Activated B cell treated with CpG ODN at 0.5 μM for 24 hours (primary cell): ENCODE measurements at regions of chr17 and their contacts with region 1.

Region 1: GRCh38 chr17:61412143-61412859 is 12.7 kb downstream of the TBX2 start:
- DNase-seq: peak; percentile 84
- ATAC-seq: peak; percentile 76
- H3K4me3 Mint-ChIP-seq: peak overlapping the region; percentile 74
- H3K27ac Mint-ChIP-seq: no peak overlapping the region
- H3K4me1 Mint-ChIP-seq: peaks cover 35% of the 10 kb centered on the region
- H3K27me3 Mint-ChIP-seq: peaks cover 29% of the 10 kb centered on the region
- CTCF ChIP-seq: peak; percentile 67

Region 2: GRCh38 chr17:60677308-60678124 is 734.8 kb before region 1 on chr17 and contains the start of gene BCAS3:
- CTCF ChIA-PET with region 1: no interaction called
- POLR2A ChIA-PET with region 1: no interaction called
- intact Hi-C with region 1: loop called (anchors 5 kb)
- DNase-seq: peak; percentile 84
- ATAC-seq: peak; percentile 95
- H3K4me3 Mint-ChIP-seq: peak within 1 kb of the TSS; percentile 99
- H3K27ac Mint-ChIP-seq: peak within 1 kb of the TSS; percentile 94
- H3K4me1 Mint-ChIP-seq: peaks cover 23% of the 10 kb centered on the region
- H3K27me3 Mint-ChIP-seq: no peaks in the 10 kb centered on the region
- CTCF ChIP-seq: no peak
- total RNA-seq, gene BCAS3: 25.8 and 37.5 TPM in 2 replicates

Region 3: DNA sequence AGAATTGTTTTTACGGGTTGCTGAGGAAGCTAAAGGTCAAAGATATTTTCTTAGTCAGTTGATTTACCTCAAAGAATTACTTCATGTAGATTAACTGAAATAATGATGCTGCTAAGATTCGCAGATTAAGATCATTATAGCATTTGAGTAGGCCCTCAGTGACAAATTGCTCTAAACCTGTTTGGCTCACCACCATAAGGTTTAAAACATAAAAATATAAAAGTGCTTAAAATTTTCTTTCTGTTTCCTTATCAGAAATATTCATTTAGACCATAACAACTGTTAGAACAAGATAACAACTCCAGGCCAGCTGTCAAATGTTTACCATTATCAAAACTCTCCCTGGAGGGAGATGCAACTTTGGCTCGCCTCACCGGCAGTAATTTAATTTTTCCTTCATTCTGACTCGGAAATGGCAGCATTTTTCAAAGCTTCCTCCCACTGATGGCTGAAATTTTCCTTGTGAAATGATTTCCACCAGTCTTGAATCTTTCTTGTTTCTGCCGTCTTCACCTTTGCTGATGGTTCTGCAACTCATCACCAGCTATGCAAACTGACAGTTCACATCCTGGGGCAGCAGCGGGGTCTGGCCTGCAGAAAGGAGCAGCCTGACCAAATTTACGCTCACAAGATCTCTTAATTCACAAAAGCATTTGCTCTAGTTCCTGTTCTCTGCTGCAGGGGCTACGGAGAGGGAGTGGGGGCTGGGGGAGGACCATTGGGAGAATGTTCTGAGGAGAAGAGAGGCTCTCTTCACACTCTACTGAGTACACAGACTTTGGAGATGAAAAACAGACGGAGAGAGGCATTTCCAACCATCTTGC is 267.3 kb before region 1 on chr17:
- CTCF ChIA-PET with region 1: no interaction called
- POLR2A ChIA-PET with region 1: no interaction called
- intact Hi-C with region 1: loop called (anchors 10 kb)
- DNase-seq: no peak
- ATAC-seq: peak; percentile 54
- H3K4me3 Mint-ChIP-seq: peak overlapping the region; percentile 61
- H3K27ac Mint-ChIP-seq: peak overlapping the region; percentile 73
- H3K4me1 Mint-ChIP-seq: peaks cover 45% of the 10 kb centered on the region
- H3K27me3 Mint-ChIP-seq: no peaks in the 10 kb centered on the region
- CTCF ChIP-seq: no peak

Region 4: GRCh38 chr17:61452301-61453290 is 40.3 kb after region 1 on chr17 and contains the start of gene TBX4:
- CTCF ChIA-PET with region 1: interaction called, 3 read pairs
- POLR2A ChIA-PET with region 1: no interaction called
- intact Hi-C with region 1: loop called (anchors 2 kb)
- DNase-seq: no peak
- ATAC-seq: no peak
- H3K4me3 Mint-ChIP-seq: peak within 1 kb of the TSS; percentile 48
- H3K27ac Mint-ChIP-seq: no peak within 1 kb of the TSS
- H3K4me1 Mint-ChIP-seq: peaks cover 32% of the 10 kb centered on the region
- H3K27me3 Mint-ChIP-seq: peaks cover 61% of the 10 kb centered on the region
- CTCF ChIP-seq: no peak
- total RNA-seq, gene TBX4: not detected in 2 replicates

Region 5: GRCh38 chr17:61635913-61636432 is 223.7 kb after region 1 on chr17:
- CTCF ChIA-PET with region 1: interaction called, 3 read pairs
- POLR2A ChIA-PET with region 1: no interaction called
- intact Hi-C with region 1: loop called (anchors 5 kb)
- DNase-seq: no peak
- ATAC-seq: no peak
- H3K4me3 Mint-ChIP-seq: no peak overlapping the region
- H3K27ac Mint-ChIP-seq: no peak overlapping the region
- H3K4me1 Mint-ChIP-seq: peaks cover 10% of the 10 kb centered on the region
- H3K27me3 Mint-ChIP-seq: peaks cover 34% of the 10 kb centered on the region
- CTCF ChIP-seq: peak; percentile 70

Region 6: DNA sequence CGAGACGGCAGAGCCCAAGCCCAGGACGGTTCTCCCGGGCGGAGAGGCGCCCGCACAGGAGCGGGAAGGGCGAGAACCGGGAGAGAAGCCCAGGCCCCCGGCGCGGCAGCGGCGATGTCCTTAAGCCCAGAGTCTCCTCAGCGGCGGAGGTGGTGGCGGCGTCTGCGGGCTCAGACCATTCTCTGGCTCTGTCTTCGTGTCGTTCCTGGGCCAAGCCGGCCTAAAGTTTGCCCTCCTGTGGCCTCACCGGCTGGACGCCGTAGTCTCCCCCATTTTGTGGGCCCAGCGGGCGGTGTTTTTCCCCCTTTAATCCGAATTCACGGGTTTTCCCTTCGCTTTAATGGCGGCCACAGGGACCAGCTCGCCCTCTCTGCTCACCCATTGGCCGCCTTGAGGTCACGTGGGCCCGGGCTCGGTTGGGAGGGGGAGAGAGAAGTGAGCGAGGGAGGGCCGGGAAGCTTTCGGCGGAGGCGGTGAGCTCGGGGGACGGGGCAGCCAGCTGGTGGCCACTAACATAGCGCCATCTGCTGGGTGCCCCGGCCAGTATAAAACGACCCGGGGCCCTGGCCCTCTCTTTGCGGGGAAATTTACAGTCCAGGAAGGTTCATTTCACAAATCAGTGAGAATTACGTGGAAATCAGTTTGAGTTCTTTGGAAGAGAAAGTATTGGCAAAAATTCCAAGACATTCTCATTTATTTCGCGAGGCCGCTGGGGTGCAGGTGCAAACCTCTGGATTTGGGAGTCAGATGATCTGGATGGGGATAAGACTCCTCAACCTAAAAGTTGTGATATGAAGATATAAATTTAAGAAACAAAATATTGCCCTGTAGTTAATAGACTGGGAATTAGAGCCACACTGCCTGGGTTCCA is 653.5 kb after region 1 on chr17:
- CTCF ChIA-PET with region 1: no interaction called
- POLR2A ChIA-PET with region 1: no interaction called
- intact Hi-C with region 1: loop called (anchors 1 kb)
- DNase-seq: peak; percentile 92
- ATAC-seq: peak; percentile 96
- H3K4me3 Mint-ChIP-seq: peak overlapping the region; percentile 96
- H3K27ac Mint-ChIP-seq: peak overlapping the region; percentile 97
- H3K4me1 Mint-ChIP-seq: peaks cover 35% of the 10 kb centered on the region
- H3K27me3 Mint-ChIP-seq: no peaks in the 10 kb centered on the region
- CTCF ChIP-seq: peak; percentile 83